GM12878 (cell line): ENCODE measurements at regions of chr17 and their contacts with region 1.

Region 1: DNA sequence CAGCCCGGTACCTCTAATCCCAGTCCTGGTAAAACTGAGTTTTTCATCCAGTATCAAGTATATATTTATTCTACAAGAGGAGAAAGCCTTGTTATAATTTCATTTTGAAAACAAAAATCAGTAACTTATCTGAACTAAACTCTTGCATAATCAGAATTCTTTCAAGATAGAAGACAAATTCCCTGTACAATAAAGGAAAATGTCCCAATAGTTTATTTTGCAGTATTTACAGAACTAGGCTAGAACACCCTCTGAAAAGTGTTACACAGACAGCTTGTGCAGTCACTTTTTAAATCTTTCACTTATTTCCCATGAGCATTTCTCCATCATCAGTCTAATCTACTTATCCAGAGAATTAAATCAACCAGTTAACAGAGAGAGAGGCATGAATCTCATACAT is 48.5 kb downstream of the SPOP start:
- DNase-seq: no peak
- ATAC-seq: no peak
- H3K4me3 ChIP-seq: no peak overlapping the region
- H3K27ac ChIP-seq: peak overlapping the region; percentile 37
- H3K4me1 ChIP-seq: no peaks in the 10 kb centered on the region
- H3K27me3 ChIP-seq: no peaks in the 10 kb centered on the region
- CTCF ChIP-seq: no peak
- EP300 ChIP-seq: no peak
- POLR2A ChIP-seq: no peak
- RAD21 ChIP-seq: no peak

Region 2: DNA sequence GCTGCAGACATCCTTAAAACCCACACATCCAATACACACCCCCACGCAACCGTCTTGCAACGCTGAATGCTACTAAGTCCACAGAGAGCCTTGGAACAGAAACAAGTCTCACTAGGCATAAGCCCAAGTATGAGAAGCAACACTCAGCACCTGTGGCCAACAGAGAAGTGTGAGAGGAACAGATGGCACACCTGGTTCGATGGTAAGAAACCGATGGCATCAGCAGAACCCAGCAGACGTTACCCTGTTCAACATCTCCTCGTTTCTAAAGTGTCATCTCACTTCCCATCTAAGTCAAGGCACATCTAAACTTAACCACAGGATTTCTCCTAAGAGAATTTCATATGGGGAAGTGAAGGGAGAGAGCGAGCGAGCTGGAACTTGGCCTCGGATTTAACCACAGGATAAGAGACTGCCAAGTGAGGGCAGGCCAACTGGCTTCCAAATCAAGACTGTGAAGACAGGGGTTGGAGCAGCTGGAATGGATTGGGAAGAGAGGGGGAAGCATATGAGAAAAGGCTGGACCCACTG is 12.8 kb before region 1 on chr17:
- CTCF ChIA-PET with region 1: interaction called, 5 read pairs
- POLR2A ChIA-PET with region 1: interaction called, 6 read pairs
- RAD21 ChIA-PET with region 1: no interaction called
- SMC1A ChIA-PET with region 1: interaction called, 16 read pairs
- in situ Hi-C with region 1: no loop called
- intact Hi-C with region 1: no loop called
- DNase-seq: no peak
- ATAC-seq: no peak
- H3K4me3 ChIP-seq: no peak overlapping the region
- H3K27ac ChIP-seq: peak overlapping the region; percentile 3; the same call in 1 of the 2 replicates
- H3K4me1 ChIP-seq: peaks cover 5% of the 10 kb centered on the region; the same call in 1 of the 2 replicates
- H3K27me3 ChIP-seq: no peaks in the 10 kb centered on the region
- CTCF ChIP-seq: no peak
- EP300 ChIP-seq: no peak
- POLR2A ChIP-seq: no peak
- RAD21 ChIP-seq: no peak

Region 3: GRCh38 chr17:49646391-49647255 is 17.2 kb after region 1 on chr17:
- CTCF ChIA-PET with region 1: interaction called, 9 read pairs
- POLR2A ChIA-PET with region 1: interaction called, 18 read pairs
- RAD21 ChIA-PET with region 1: interaction called, 4 read pairs
- SMC1A ChIA-PET with region 1: interaction called, 53 read pairs
- in situ Hi-C with region 1: no loop called
- intact Hi-C with region 1: no loop called
- DNase-seq: peak; percentile 45
- ATAC-seq: peak; percentile 95
- H3K4me3 ChIP-seq: 0 out of 2 replicates have a peak overlapping the region, but pooled peaks have one; percentile 6
- H3K27ac ChIP-seq: peak overlapping the region; percentile 79
- H3K4me1 ChIP-seq: peaks cover 27% of the 10 kb centered on the region
- H3K27me3 ChIP-seq: no peaks in the 10 kb centered on the region
- CTCF ChIP-seq: no peak
- EP300 ChIP-seq: no peak
- POLR2A ChIP-seq: no peak
- RAD21 ChIP-seq: no peak